ENCODE measurements at regions of chr2 and their contacts with region 1.

Region 1: GRCh38 chr2:121699421-121700333 is 37.0 kb downstream of the NIFK start:
- DNase-seq: peak; percentile 28 to 49 (median 40)
- ATAC-seq: peak; percentile 75
- H3K4me3 ChIP-seq: no peak overlapping the region
- H3K27ac ChIP-seq: no peak overlapping the region
- H3K4me1 ChIP-seq: peaks cover 17 to 32% of the 10 kb centered on the region in 2 experiments
- H3K27me3 ChIP-seq: no peaks in the 10 kb centered on the region
- CTCF ChIP-seq: no peak
- EP300 ChIP-seq: no peak
- POLR2A ChIP-seq: no peak
- RAD21 ChIP-seq: no peak

Region 2: GRCh38 chr2:121649596-121650314 is 49.9 kb before region 1 on chr2:
- CTCF ChIA-PET with region 1: no interaction called
- POLR2A ChIA-PET with region 1: interaction called, 3 read pairs
- in situ Hi-C with region 1: no loop called
- intact Hi-C with region 1: loop called (anchors 5 kb)
- DNase-seq: peak; percentile 95 to 98 (median 96)
- ATAC-seq: peak; percentile 93
- H3K4me3 ChIP-seq: peak overlapping the region; percentile 88
- H3K27ac ChIP-seq: peak overlapping the region; percentile 100
- H3K4me1 ChIP-seq: peaks cover 12 to 23% of the 10 kb centered on the region in 2 experiments
- H3K27me3 ChIP-seq: no peaks in the 10 kb centered on the region
- CTCF ChIP-seq: no peak
- EP300 ChIP-seq: peak; percentile 57
- POLR2A ChIP-seq: peak; percentile 95
- RAD21 ChIP-seq: no peak

Region 3: DNA sequence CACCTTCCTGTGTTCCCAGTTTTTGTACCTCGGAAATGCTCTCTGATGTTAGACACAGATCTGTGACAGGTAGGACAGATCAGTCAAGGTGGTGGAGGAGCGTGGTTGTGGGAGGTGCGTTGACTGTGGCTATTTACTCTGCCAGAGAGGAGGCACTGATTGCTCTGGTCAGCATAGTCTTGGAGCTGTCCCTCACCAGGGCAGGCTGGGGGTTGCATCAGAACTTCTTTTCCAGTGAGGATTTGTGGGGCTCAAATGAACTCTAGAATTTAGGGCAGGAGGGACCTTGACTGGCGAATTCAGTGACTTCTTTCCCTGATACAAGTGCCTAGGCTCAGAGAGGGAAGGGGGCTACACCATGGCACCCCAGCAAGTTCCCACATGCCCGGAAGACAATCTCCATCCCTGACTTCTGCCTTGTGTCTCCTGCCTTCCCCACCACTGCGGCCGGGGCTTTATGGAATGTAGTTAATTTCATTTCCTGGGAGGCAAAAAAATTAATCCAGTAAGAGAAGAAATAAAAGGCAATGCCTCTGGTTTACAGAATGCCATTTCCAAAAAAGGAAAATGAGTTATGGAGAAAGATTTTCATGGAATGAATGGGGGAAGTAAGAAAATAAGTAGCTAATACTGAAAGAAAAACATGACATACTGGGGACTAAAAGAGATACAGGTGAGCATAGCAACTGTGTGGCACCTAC is 10.9 kb after region 1 on chr2:
- CTCF ChIA-PET with region 1: no interaction called
- POLR2A ChIA-PET with region 1: no interaction called
- in situ Hi-C with region 1: no loop called
- intact Hi-C with region 1: loop called (anchors 1 kb)
- DNase-seq: peak in 1 of 4 experiments; percentile 4
- ATAC-seq: no peak
- H3K4me3 ChIP-seq: no peak overlapping the region
- H3K27ac ChIP-seq: no peak overlapping the region
- H3K4me1 ChIP-seq: no peaks in the 10 kb centered on the region
- H3K27me3 ChIP-seq: peaks cover 3 to 9% of the 10 kb centered on the region in 2 experiments; a peak in 2 of 5 replicates
- CTCF ChIP-seq: no peak
- EP300 ChIP-seq: no peak
- POLR2A ChIP-seq: no peak
- RAD21 ChIP-seq: no peak

Region 4: GRCh38 chr2:122028371-122029100 is 328.9 kb after region 1 on chr2:
- CTCF ChIA-PET with region 1: no interaction called
- POLR2A ChIA-PET with region 1: no interaction called
- in situ Hi-C with region 1: no loop called
- intact Hi-C with region 1: no loop called
- DNase-seq: no peak
- ATAC-seq: no peak
- H3K4me3 ChIP-seq: no peak overlapping the region
- H3K27ac ChIP-seq: no peak overlapping the region
- H3K4me1 ChIP-seq: no peaks in the 10 kb centered on the region
- H3K27me3 ChIP-seq: peaks cover 0 to 22% of the 10 kb centered on the region in 2 experiments; a peak in 2 of 5 replicates
- CTCF ChIP-seq: no peak
- EP300 ChIP-seq: no peak
- POLR2A ChIP-seq: no peak
- RAD21 ChIP-seq: no peak

Measured in K562 (cell line).